ENCODE measurements at regions of chr1 and their contacts with region 1.

Region 1: DNA sequence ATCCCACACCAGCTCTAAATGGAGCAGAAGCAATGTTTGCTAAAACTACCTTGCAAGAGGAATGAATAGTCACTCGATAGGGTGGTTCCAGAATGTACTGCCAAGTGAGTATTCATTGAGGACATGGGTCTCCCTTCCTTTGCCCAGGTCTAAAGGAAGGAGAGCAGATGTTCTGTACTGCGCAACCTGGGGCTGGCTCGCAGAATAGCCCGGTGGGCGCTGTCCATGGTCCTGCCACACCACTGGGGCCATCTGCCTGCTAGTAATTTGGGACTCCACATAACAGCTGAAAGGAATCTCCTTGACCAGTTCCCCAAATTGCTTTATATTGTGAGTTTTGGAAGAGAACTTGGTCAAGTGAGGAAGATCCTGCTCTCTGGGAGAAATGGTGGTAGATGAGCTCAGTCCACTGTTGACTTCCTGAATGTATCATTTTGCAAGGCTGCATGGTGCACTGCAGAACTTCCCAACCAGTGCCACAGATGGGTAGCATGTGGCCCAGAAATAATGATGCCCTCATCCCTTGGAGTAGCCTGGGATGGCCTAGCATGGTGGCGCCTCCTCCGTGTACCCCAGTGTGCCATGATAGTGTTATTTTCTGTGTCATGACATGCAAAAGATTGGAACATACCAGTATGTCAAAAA is 5.7 kb downstream of the SLC6A17 start:
- DNase-seq: peak in 1 of 2 experiments; percentile 94
- H3K4me3 ChIP-seq: no peak overlapping the region
- H3K27ac ChIP-seq: no peak overlapping the region
- H3K4me1 ChIP-seq: no peaks in the 10 kb centered on the region
- H3K27me3 ChIP-seq: peaks cover 16 to 44% (median 34%) of the 10 kb centered on the region in 4 experiments
- CTCF ChIP-seq: no peak
- EP300 ChIP-seq: no peak
- POLR2A ChIP-seq: no peak
- RAD21 ChIP-seq: 0 out of 4 replicates have a peak, but pooled peaks of 1 of the 2 experiments have one; percentile 13

Region 2: DNA sequence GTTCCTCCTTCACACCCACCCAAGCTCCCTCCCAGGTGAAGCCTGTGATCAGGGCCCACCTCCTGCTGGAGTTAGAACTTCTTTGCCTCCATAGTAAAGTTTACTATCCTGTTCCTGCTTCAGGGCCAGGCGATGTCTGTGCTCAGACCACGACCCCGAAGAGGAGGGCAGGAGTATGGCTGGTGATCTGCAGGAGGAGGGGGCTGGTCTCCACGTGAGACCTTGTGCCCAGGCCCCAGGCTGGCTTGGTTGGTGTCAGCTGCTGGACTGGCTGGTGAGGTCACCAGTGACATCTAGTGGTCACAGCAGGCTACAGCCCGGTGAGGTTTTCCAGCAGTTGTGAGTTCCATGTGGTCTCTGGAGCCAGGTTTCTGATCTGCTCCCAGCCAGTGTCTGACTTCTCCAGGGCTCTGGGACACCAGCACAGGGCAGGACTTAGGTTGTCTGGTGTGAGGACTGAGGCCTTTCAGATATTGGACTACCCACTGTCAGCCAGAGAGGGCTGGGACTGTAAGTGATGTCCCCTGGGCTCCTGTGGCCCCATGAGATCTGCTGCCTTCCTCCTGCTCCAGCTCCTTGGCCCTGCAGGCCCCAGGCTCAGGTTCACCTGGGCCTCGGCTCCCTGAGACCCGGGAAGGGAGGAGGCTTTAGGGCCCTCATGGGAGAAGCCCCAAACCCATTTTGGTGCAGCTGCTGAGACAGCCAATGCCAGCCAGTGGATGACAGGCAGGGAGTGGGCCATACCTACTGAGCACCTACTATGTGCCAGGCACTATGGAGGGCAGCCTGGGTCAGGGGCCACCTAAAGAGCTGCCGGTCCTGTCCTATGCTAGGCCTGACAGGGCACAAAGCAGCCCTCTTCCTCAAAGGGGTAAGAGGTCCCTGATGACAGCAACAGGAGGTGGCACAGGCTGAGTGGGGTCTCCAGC is 49.7 kb before region 1 on chr1:
- CTCF ChIA-PET with region 1: interaction called, 13 read pairs
- POLR2A ChIA-PET with region 1: no interaction called
- DNase-seq: peak; percentile 51 to 84
- H3K4me3 ChIP-seq: no peak overlapping the region
- H3K27ac ChIP-seq: no peak overlapping the region
- H3K4me1 ChIP-seq: no peaks in the 10 kb centered on the region
- H3K27me3 ChIP-seq: no peaks in the 10 kb centered on the region; a peak in 2 of 7 replicates
- CTCF ChIP-seq: peak; percentile 91 to 99 (median 97)
- EP300 ChIP-seq: no peak
- POLR2A ChIP-seq: no peak
- RAD21 ChIP-seq: peak; percentile 89 to 91

Measured in H1 (cell line).